ENCODE measurements at regions of chr11 and their contacts with region 1.

Region 1: DNA sequence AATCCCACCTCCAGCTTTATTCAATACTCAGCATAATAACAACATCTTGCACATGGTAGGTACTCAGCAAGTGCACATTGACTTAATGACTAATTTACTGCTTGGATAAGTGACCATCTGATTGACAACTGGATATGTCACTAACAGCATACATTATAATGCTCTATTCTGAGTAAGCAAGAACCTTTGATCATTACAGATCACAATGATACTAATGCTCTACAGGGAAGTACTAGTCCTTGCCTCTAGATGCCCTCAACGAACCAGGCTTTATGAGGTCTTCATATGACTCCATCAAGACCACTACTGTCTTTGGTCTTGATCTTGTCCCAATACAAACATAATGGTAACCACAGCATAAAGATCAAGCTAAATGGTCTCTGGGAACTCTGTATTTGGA is 167.6 kb upstream of the MTMR2 start:
- DNase-seq: peak; percentile 26
- H3K4me3 Mint-ChIP-seq: no peak overlapping the region
- H3K27ac Mint-ChIP-seq: no peak overlapping the region
- H3K4me1 Mint-ChIP-seq: peaks cover 56% of the 10 kb centered on the region
- H3K27me3 Mint-ChIP-seq: no peaks in the 10 kb centered on the region

Region 2: DNA sequence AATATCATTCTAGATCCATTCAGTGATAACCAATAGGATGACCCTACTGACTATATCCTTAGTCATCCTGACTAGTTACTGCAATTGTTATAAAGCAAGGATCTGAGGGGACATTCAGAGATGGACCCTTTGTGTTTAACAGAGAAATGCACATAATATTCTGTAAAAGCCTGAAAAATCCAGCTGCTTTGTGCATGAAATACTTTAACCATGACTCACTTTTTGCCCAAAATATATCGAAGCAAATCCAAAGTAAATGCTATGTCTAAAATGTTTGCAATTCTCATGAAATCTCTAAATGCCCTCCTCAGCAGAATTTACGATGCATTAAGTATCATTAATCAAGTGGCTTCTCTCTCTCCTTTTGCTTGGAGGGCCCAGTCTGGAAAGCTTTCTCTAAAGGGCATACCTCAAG is 11.2 kb after region 1 on chr11:
- CTCF ChIA-PET with region 1: interaction called, 3 read pairs
- intact Hi-C with region 1: loop called (anchors 1 kb)
- DNase-seq: no peak
- H3K4me3 Mint-ChIP-seq: no peak overlapping the region
- H3K27ac Mint-ChIP-seq: no peak overlapping the region
- H3K4me1 Mint-ChIP-seq: peaks cover 64% of the 10 kb centered on the region
- H3K27me3 Mint-ChIP-seq: no peaks in the 10 kb centered on the region

Region 3: GRCh38 chr11:96122601-96123074 is 31.2 kb after region 1 on chr11:
- CTCF ChIA-PET with region 1: no interaction called
- intact Hi-C with region 1: no loop called
- DNase-seq: no peak
- H3K4me3 Mint-ChIP-seq: no peak overlapping the region
- H3K27ac Mint-ChIP-seq: no peak overlapping the region
- H3K4me1 Mint-ChIP-seq: peaks cover 50% of the 10 kb centered on the region
- H3K27me3 Mint-ChIP-seq: no peaks in the 10 kb centered on the region

Region 4: GRCh38 chr11:96136613-96137298 is 45.3 kb after region 1 on chr11:
- CTCF ChIA-PET with region 1: no interaction called
- intact Hi-C with region 1: no loop called
- DNase-seq: no peak
- H3K4me3 Mint-ChIP-seq: peak overlapping the region; percentile 28
- H3K27ac Mint-ChIP-seq: peak overlapping the region; percentile 92
- H3K4me1 Mint-ChIP-seq: peaks cover 70% of the 10 kb centered on the region
- H3K27me3 Mint-ChIP-seq: no peaks in the 10 kb centered on the region

Region 5: GRCh38 chr11:96424693-96425092 is 333.2 kb after region 1 on chr11:
- CTCF ChIA-PET with region 1: no interaction called
- intact Hi-C with region 1: no loop called
- DNase-seq: no peak
- H3K4me3 Mint-ChIP-seq: no peak overlapping the region
- H3K27ac Mint-ChIP-seq: no peak overlapping the region
- H3K4me1 Mint-ChIP-seq: peaks cover 4% of the 10 kb centered on the region
- H3K27me3 Mint-ChIP-seq: peaks cover 17% of the 10 kb centered on the region

Region 6: DNA sequence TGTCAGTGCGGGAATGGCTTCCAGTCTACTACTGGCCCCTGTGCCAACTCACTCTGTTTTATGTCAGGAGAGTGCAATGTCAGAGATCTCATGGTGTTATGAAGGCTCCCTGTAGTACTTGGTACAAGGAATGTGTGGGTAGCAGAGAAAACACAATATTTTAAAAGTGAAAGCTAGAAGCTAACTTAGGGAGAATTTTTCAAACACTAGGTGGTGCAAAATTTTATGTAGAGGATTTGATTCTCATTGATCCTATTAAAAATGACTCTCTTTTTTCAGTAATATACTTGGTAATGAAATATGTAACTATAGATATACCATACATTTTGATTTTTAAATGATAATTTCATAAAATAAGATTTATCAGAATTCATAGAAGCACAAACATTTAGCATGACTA is 433.0 kb after region 1 on chr11:
- CTCF ChIA-PET with region 1: no interaction called
- intact Hi-C with region 1: no loop called
- DNase-seq: no peak
- H3K4me3 Mint-ChIP-seq: no peak overlapping the region
- H3K27ac Mint-ChIP-seq: no peak overlapping the region
- H3K4me1 Mint-ChIP-seq: no peaks in the 10 kb centered on the region
- H3K27me3 Mint-ChIP-seq: peaks cover 5% of the 10 kb centered on the region